B cell (primary cell): ENCODE measurements at regions of chr2 and their contacts with region 1.

Region 1: DNA sequence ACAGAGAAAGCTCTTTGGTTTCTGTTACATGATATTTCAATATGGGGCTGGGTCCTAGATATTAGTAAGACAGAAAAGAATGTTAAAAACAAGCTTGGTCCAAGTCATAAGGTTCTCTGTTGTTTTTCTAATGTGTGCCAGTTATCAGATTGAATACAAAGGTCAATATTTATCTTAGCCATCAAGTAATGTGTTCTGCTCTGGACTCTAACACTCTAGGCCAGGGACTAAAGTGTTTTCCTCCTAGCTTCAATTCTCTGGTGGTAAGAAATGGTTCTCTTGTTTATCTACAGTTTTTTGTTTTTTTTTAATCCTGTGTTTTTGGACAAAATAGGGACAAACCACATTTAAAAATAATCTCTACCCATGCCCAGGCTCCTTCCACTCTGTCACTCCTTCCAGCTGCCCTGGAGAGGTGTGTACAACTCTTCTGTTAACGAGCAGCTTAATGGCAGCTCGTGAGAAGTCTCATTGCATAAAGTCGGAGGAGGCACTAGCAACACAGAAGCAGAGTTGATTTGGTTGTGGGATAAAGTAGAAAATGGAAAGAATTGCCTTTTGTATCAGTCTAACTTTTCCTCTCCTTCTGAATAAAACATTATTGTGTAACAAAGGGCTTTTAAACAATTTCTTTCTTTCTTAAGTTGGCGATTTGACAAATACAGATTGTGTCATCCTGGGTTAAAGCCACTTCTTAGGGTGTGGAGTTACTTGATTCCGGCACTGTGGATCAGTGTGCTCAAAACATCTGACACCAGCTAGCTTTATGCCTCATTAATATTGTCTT is 8.0 kb upstream of the SESTD1 start:
- DNase-seq: no peak
- ATAC-seq: no peak
- H3K4me3 ChIP-seq: no peak overlapping the region
- H3K4me3 Mint-ChIP-seq: no peak overlapping the region
- H3K27ac ChIP-seq: no peak overlapping the region
- H3K27ac Mint-ChIP-seq: no peak overlapping the region
- H3K4me1 ChIP-seq: peaks cover 29 to 33% of the 10 kb centered on the region in 2 donors
- H3K4me1 Mint-ChIP-seq: peaks cover 39% of the 10 kb centered on the region
- H3K27me3 ChIP-seq: no peaks in the 10 kb centered on the region
- H3K27me3 Mint-ChIP-seq: no peaks in the 10 kb centered on the region
- CTCF ChIP-seq: no peak

Region 2: DNA sequence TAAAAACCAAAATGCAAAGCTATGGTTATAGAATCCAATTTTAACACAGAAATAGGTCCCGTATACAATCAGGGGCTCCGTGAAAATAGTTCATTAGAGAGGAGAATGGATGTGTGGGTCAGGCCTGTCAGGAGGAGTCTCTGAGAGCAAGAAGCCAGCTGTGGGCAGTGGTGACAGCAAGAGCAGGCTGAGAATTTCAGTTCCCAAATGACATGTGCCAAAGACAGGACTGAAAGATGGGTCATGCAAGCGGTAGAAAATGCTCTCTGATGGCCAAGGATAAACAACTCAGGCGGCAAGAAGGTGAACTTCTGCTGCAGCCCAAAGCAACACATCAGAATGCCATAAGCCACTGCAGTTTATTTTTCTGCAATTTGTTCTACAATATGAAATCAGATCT is 323.0 kb before region 1 on chr2:
- CTCF ChIA-PET with region 1: no interaction called
- POLR2A ChIA-PET with region 1: no interaction called
- intact Hi-C with region 1: no loop called
- DNase-seq: no peak
- ATAC-seq: no peak
- H3K4me3 ChIP-seq: no peak overlapping the region
- H3K4me3 Mint-ChIP-seq: no peak overlapping the region
- H3K27ac ChIP-seq: no peak overlapping the region
- H3K27ac Mint-ChIP-seq: no peak overlapping the region
- H3K4me1 ChIP-seq: no peaks in the 10 kb centered on the region
- H3K4me1 Mint-ChIP-seq: no peaks in the 10 kb centered on the region
- H3K27me3 ChIP-seq: no peaks in the 10 kb centered on the region
- H3K27me3 Mint-ChIP-seq: no peaks in the 10 kb centered on the region
- CTCF ChIP-seq: no peak

Region 3: DNA sequence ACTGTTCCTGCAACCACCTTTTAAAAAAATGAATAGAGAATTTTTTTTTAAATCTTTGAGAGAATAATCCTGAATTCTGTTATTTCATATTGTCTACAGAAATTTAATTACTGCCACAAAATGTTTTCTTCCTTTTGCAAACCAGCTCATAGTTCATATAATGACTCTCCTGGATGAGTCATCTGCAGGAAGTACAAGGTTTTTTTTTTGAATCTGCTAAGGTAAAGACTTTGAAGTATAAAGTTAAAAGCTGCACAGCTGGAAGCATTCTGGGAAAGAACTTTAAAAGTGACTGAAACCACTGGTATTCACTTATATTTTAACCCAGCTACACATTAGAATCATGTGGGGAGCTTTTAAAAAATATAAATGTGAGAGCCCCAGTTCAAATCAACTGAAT is 33.4 kb before region 1 on chr2:
- CTCF ChIA-PET with region 1: no interaction called
- POLR2A ChIA-PET with region 1: no interaction called
- intact Hi-C with region 1: loop called (anchors 5 kb)
- DNase-seq: no peak
- ATAC-seq: no peak
- H3K4me3 ChIP-seq: no peak overlapping the region
- H3K4me3 Mint-ChIP-seq: no peak overlapping the region
- H3K27ac ChIP-seq: no peak overlapping the region
- H3K27ac Mint-ChIP-seq: no peak overlapping the region
- H3K4me1 ChIP-seq: peaks cover 28 to 48% of the 10 kb centered on the region in 2 donors
- H3K4me1 Mint-ChIP-seq: peaks cover 69% of the 10 kb centered on the region
- H3K27me3 ChIP-seq: no peaks in the 10 kb centered on the region
- H3K27me3 Mint-ChIP-seq: no peaks in the 10 kb centered on the region
- CTCF ChIP-seq: no peak